ENCODE measurements at regions of chr12 and their contacts with region 1.

Region 1: GRCh38 chr12:50504798-50505385 is at the start of gene DIP2B:
- DNase-seq: peak; percentile 98
- ATAC-seq: peak; percentile 99
- H3K4me3 ChIP-seq: peak within 1 kb of the TSS; percentile 86
- H3K27ac ChIP-seq: peak within 1 kb of the TSS; percentile 91
- H3K4me1 ChIP-seq: peaks cover 43% of the 10 kb centered on the region
- H3K27me3 ChIP-seq: no peaks in the 10 kb centered on the region
- CTCF ChIP-seq: peak; percentile 94
- total RNA-seq, gene DIP2B: 32.8 TPM

Region 2: DNA sequence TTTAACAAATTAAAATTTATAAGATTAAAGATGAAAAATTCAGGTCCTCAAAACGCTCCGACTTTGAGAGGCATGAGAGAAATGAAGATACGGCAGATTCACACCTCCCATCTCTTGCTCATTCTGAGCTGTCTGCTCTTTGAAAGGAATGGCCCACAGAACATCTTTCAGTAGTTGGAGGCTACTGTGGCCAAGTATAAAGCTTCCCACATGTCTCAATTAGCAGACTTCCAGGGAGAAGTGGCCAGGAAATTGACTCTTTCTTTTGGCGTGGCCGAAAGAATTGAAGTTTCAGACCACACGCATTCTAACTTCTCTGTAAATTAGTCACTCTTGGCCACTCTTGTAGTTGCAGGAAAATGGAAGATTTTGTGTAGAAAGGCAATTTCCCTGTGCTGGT is 129.1 kb after region 1 on chr12:
- intact Hi-C with region 1: loop called (anchors 5 kb)
- DNase-seq: no peak
- ATAC-seq: no peak
- H3K4me3 ChIP-seq: no peak overlapping the region
- H3K27ac ChIP-seq: no peak overlapping the region
- H3K4me1 ChIP-seq: peaks cover 20% of the 10 kb centered on the region
- H3K27me3 ChIP-seq: no peaks in the 10 kb centered on the region
- CTCF ChIP-seq: no peak

Region 3: GRCh38 chr12:50763639-50764285 is 258.9 kb after region 1 on chr12 and contains the start of gene ATF1:
- intact Hi-C with region 1: no loop called
- DNase-seq: peak; percentile 95
- ATAC-seq: peak; percentile 94 to 96
- H3K4me3 ChIP-seq: peak within 1 kb of the TSS; percentile 98
- H3K27ac ChIP-seq: peak within 1 kb of the TSS; percentile 96
- H3K4me1 ChIP-seq: peaks cover 35% of the 10 kb centered on the region
- H3K27me3 ChIP-seq: no peaks in the 10 kb centered on the region
- CTCF ChIP-seq: no peak
- total RNA-seq, gene ATF1: 47.0 TPM